GM18951 (cell line): ENCODE measurements at regions of chr10 and their contacts with region 1.

Region 1: DNA sequence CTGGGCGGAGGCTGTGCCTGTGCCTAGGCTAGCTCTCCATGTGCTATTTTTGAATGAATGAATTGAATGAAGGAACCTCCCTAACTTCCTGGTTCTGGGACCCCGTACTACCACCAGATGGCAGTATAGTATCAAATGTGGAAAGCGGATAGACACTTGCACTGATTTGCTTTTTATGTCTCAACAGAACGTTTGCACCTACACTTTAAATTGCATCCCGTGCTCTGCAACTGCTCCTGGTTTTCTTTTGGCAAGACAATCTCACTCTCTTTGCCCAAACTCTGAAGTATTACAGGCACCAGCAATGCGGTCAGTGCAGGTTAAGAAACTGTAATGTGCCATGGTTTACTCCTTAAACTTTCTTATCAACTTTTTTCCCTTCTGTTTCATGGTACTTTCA is 6.5 kb downstream of the FZD8 start:
- POLR2A ChIP-seq: no peak

Region 2: GRCh38 chr10:35178331-35178730 is 457.2 kb before region 1 on chr10:
- in situ Hi-C with region 1: no loop called
- POLR2A ChIP-seq: no peak

Region 3: DNA sequence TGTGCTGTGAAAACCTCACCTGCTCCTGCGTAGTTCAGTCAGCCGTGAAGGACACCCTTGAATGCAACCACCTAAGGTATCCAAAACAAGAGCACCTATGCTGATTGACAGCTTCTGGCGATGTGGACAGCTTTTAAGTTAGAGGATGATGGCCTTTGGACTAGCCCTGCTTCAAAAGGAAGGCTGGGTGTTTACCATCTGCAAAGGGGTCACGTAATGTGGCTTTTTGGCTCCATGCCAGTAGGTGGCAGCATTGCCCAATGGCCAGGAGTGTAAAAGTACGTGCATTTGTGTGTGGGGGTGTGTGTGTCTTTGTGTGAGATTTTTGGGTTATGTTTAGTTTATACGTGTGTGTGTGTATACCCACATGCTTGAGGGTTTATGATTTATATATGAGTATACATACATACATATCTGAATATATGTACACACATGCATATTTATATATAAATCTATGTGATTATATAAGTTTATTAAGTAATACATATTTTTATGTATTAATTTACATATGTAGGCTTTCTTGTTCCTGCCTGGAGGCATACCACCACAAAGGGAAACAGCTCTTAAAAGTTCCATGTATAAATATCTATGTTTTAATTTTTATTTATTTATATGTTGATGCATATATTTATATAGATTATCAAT is 1253.5 kb after region 1 on chr10:
- in situ Hi-C with region 1: loop called (anchors 10 kb)
- POLR2A ChIP-seq: no peak